Gastrocnemius medialis (tissue), 4 donors: ENCODE measurements at regions of chr12 and their contacts with region 1.

Region 1: DNA sequence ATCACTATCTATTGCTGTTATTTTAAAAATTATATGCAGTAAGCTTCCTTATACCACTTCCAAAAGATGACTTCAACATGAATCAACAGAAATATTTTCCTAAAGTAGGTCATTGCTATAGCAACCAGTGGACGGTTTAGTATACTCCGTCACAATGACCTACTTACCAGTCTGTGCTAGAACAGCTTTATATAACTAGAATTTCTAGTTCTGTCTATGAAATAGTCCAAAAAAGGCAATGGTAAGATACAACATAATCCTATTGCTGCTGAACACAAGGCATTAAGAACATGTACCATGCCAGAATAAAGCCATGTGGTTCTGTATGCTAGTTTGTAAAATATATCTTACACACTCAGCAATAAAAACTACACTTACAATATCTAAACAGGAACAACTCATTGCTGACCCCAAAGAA is 40.7 kb upstream of the MTERF2 start:
- DNase-seq: peak; percentile 9 to 23
- ATAC-seq: peak; percentile 98 to 99
- H3K4me3 ChIP-seq: peak overlapping the region; percentile 11 to 39 (median 32)
- H3K27ac ChIP-seq: peak overlapping the region; percentile 76 to 89 (median 84)
- H3K4me1 ChIP-seq: peaks cover 47 to 62% of the 10 kb centered on the region in 2 donors
- H3K27me3 ChIP-seq: no peaks in the 10 kb centered on the region
- CTCF ChIP-seq: no peak
- POLR2A ChIP-seq: peak in 1 of 2 donors; percentile 28

Region 2: DNA sequence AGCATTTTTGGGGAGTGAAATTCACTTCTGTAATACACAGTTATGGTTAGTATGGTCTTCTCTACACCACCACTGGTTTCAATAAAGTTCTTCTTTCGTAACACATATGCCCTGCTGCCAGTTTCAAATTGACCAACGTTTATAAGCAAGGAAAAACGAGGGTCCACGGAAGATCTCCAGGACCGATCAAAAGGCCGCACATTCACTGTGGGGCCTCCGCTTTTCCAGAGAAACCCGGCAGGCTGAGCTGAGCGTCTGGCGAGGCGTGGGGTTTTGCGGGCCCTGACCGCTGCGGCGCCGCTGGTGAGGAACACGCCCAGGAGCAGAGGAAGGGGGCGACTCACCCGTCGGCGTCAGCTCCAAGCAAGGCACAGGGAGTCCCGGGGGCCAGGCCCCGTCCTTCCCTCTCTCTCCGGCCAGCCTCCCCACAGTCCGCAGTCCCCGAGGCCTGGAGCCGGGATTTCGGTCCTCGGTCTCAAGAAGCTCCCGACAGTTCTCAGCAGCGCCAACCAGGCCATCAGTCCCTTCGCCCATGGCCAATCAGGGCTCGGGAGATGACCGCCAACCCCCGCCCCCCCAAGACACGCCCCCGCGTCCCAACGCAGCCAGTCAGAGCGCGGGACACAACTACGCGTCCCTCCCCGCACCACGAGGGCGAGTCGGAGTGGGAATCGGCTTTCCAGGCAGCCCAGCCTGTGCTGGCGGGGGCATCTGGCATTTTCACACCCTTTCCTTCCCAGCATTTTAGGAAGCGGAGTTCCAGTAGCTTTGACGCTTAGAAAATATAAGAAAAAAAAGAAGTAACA is 40.8 kb before region 1 on chr12 and contains the start of gene MTERF2:
- in situ Hi-C with region 1: no loop called
- intact Hi-C with region 1: loop called (anchors 1 kb)
- DNase-seq: peak; percentile 95
- ATAC-seq: peak; percentile 96 to 97
- H3K4me3 ChIP-seq: peak within 1 kb of the TSS; percentile 69 to 90 (median 74)
- H3K27ac ChIP-seq: peak within 1 kb of the TSS; percentile 87 to 98 (median 93)
- H3K4me1 ChIP-seq: peaks cover 17 to 18% of the 10 kb centered on the region in 2 donors
- H3K27me3 ChIP-seq: no peaks in the 10 kb centered on the region
- CTCF ChIP-seq: no peak
- POLR2A ChIP-seq: peak; percentile 77 to 86
- total RNA-seq, gene MTERF2: 5.0 to 24.6 (median 13.7) TPM

Region 3: GRCh38 chr12:107057071-107057818 is 29.6 kb after region 1 on chr12:
- in situ Hi-C with region 1: no loop called
- intact Hi-C with region 1: no loop called
- DNase-seq: no peak
- ATAC-seq: no peak
- H3K4me3 ChIP-seq: no peak overlapping the region
- H3K27ac ChIP-seq: no peak overlapping the region
- H3K4me1 ChIP-seq: peaks cover 15 to 19% of the 10 kb centered on the region in 2 donors
- H3K27me3 ChIP-seq: no peaks in the 10 kb centered on the region
- CTCF ChIP-seq: no peak
- POLR2A ChIP-seq: no peak

Region 4: GRCh38 chr12:107080299-107080698 is 52.7 kb after region 1 on chr12:
- in situ Hi-C with region 1: no loop called
- intact Hi-C with region 1: no loop called
- DNase-seq: no peak
- ATAC-seq: no peak
- H3K4me3 ChIP-seq: no peak overlapping the region
- H3K27ac ChIP-seq: no peak overlapping the region
- H3K4me1 ChIP-seq: peaks cover 15 to 27% of the 10 kb centered on the region in 2 donors
- H3K27me3 ChIP-seq: no peaks in the 10 kb centered on the region
- CTCF ChIP-seq: no peak
- POLR2A ChIP-seq: no peak

Region 5: DNA sequence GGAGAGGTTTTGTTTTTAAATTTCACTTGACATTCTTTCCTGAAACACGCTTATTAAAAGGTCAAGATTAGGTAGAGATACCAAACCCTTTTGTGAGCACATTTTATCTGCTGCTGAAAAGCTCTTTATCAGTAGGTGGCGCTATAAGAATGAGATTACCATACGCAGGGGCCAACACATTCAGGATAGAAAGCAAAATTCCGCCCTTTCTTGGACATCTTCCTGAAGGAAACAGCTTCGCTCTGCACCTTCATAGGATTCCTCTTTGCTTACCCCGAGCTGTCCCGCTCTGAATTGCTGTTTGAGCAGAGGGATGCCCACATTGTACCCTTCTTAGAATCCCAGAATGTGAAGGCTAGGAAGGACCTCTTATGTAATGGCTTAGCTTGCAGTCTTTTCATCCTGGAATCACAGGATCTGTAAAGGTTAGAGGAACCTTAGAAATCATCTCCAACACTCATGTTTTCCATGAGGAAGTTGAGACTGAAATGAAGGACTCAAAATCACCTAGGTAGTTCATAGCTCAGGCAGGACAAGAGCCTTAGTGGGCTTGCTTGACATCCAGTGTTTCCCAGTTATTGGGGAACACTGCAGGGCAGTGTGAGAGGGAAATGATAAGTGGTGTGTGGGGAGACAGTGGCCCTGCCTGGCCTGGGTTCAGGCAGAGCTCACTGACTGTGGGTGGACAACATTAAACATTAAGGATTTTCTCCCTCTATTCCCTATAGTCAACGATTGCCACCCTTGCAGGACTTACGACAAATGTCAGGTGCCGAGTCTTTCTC is 104.4 kb after region 1 on chr12:
- in situ Hi-C with region 1: no loop called
- intact Hi-C with region 1: no loop called
- DNase-seq: no peak
- ATAC-seq: no peak
- H3K4me3 ChIP-seq: no peak overlapping the region
- H3K27ac ChIP-seq: no peak overlapping the region
- H3K4me1 ChIP-seq: no peaks in the 10 kb centered on the region
- H3K27me3 ChIP-seq: no peaks in the 10 kb centered on the region
- CTCF ChIP-seq: peak in 4 of 5 experiments; percentile 38 to 66 (median 54)
- POLR2A ChIP-seq: no peak

Region 6: DNA sequence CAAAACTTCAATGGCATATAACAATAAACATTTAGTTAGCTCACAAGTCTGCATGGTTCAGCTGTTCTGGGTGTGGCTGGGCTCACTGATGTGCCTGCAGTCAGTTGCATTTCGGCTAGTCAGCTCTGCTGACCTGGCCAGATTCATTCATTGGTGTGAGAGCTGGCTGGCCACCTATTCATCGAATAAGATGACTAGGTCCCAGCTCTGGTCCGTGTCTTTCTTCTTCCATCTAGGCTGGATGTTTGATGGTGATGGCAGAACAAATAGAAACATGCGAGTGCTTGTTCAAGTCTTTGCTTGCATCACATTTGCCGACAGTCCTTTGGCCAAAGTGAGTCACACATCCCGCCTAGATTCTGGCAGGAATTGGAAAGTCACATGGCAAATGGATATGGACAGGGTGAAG is 269.0 kb after region 1 on chr12:
- in situ Hi-C with region 1: no loop called
- intact Hi-C with region 1: no loop called
- DNase-seq: no peak
- ATAC-seq: no peak
- H3K4me3 ChIP-seq: no peak overlapping the region
- H3K27ac ChIP-seq: no peak overlapping the region
- H3K4me1 ChIP-seq: no peaks in the 10 kb centered on the region
- H3K27me3 ChIP-seq: no peaks in the 10 kb centered on the region
- CTCF ChIP-seq: no peak
- POLR2A ChIP-seq: no peak